ENCODE measurements at regions of chr7 and their contacts with region 1.

Region 1: GRCh38 chr7:90430614-90431471 is 27.6 kb downstream of the CLDN12 start:
- DNase-seq: no peak
- H3K4me3 ChIP-seq: no peak overlapping the region
- H3K27ac ChIP-seq: no peak overlapping the region
- H3K4me1 ChIP-seq: no peaks in the 10 kb centered on the region
- H3K27me3 ChIP-seq: no peaks in the 10 kb centered on the region
- CTCF ChIP-seq: no peak
- EP300 ChIP-seq: no peak
- RAD21 ChIP-seq: no peak

Region 2: DNA sequence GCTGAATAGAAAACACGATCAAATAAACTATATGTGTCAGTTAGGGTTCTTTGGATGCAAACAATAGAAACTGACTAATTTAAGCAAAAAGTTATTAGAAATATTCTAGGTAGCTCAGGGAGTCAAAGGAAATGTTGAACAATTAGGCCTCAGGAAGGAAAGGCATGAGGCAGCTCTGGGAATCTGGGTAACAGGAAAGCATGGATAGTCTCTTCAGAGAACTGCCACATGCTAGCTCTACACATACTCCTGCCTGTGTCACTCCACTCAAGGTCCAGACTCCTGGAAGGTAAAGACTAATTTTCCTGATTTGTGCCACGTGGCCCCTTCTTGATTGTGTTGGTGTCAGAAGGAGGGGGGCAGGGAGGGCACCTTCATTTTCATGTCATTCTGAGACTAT is 14.8 kb after region 1 on chr7:
- CTCF ChIA-PET with region 1: interaction called, 41 read pairs
- POLR2A ChIA-PET with region 1: no interaction called
- DNase-seq: no peak
- H3K4me3 ChIP-seq: no peak overlapping the region
- H3K27ac ChIP-seq: no peak overlapping the region
- H3K4me1 ChIP-seq: no peaks in the 10 kb centered on the region
- H3K27me3 ChIP-seq: no peaks in the 10 kb centered on the region
- CTCF ChIP-seq: no peak
- EP300 ChIP-seq: no peak
- RAD21 ChIP-seq: no peak

Region 3: GRCh38 chr7:90586091-90586490 is 155.2 kb after region 1 on chr7:
- CTCF ChIA-PET with region 1: no interaction called
- POLR2A ChIA-PET with region 1: no interaction called
- DNase-seq: no peak
- H3K4me3 ChIP-seq: no peak overlapping the region
- H3K27ac ChIP-seq: no peak overlapping the region
- H3K4me1 ChIP-seq: no peaks in the 10 kb centered on the region
- H3K27me3 ChIP-seq: no peaks in the 10 kb centered on the region
- CTCF ChIP-seq: no peak
- EP300 ChIP-seq: no peak
- RAD21 ChIP-seq: no peak

Region 4: DNA sequence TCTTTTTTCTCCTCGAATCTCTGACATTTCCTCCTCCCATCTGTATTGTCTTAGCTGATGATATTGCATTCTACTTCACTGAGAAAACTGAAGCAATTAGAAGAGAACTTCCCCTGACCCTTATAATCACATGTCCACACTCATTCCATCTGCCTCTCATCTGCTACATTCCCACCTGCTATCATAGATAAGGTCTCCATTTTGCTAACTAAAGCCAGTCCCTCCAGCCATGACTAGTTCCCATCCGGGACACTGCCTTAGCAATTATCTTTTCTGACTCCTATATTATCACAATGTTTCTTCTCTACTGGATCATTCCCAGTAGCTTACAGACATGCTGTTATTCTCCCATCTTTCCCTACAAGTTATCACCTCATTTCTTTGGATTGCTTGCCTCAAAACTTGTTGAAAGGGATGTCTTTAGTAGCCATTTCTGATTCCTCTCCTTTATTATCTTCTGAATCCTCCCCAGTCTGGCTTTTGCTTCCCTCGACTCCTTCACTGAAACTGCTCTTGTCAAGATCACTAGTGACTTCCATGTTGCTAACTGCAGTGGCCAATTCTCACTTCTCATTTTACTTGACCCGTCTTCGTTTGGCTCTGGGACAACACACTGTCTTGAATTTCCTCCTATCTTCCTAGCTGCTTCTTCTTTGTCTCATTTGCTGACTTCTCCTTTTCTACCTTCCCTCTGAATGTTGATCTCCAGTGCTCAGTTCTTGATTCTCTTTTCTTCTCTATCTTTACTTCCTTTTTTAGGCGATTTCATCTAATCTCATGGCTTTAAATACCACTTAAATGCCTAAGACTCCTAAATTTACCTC is 869.3 kb after region 1 on chr7:
- CTCF ChIA-PET with region 1: no interaction called
- POLR2A ChIA-PET with region 1: no interaction called
- DNase-seq: no peak
- H3K4me3 ChIP-seq: no peak overlapping the region
- H3K27ac ChIP-seq: no peak overlapping the region
- H3K4me1 ChIP-seq: no peaks in the 10 kb centered on the region
- H3K27me3 ChIP-seq: peaks cover 13% of the 10 kb centered on the region; the same call in 1 of the 2 replicates
- CTCF ChIP-seq: no peak
- EP300 ChIP-seq: no peak
- RAD21 ChIP-seq: no peak

Measured in SK-N-SH (cell line).